Lower leg skin (tissue), 4 donors: ENCODE measurements at regions of chr6 and their contacts with region 1.

Region 1: GRCh38 chr6:157981395-157982296 is at the start of gene SYNJ2:
- DNase-seq: peak; percentile 44 to 94
- H3K4me3 ChIP-seq: peak within 1 kb of the TSS; percentile 69
- CTCF ChIP-seq: no peak
- POLR2A ChIP-seq: no peak
- total RNA-seq, gene SYNJ2: 2.6 to 7.5 (median 5.5) TPM

Region 2: DNA sequence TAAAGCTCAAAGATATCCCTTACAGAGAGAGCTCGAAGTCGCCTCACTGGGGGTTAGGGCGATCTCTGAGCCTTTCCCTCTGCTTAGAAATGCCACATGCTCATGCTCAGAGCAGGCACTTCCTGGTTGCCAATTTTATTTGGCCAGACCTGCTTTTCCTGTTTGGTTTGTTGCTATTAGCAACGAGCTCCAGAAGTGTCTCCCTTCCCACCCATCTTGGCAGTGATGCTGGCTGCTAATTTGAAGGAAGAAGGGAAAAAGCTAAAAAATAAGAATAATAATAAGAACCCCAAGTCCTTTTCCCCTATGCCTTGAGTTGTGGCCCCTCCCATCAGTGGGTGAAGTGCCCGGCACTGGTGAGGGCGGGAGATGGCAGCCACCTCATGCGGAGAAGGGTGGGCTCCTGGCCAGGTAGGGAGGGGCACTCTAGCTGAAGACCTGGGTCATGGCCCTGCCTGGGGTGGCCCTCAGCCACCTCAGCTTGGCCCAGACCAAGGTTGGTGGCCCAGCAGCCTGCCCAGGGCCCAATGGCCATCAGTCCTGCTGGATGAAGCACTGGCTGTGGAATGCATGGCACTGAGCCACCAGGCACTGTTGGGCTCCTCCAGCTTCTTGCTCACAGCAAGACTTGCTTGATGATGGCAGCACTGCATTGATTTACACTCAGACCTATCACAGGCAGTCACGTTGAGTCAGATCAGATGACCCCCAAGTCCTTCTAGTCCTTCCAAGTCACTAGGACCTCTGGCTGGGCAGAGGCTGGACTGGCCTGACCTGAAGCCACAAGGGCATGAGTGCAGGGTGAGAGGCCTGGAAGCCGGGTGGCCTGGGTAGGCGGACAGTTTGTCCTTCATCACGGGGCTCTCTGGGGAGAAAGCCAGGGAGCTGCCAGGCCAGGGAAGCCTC is 79.1 kb after region 1 on chr6:
- intact Hi-C with region 1: loop called (anchors 5 kb)
- DNase-seq: peak; percentile 84 to 96
- H3K4me3 ChIP-seq: no peak overlapping the region
- CTCF ChIP-seq: no peak
- POLR2A ChIP-seq: no peak